GM10248 (cell line): ENCODE measurements at regions of chrX and their contacts with region 1.

Region 1: GRCh38 chrX:151151665-151152267 is 24.6 kb upstream of the GPR50 start:
- DNase-seq: peak; percentile 38
- CTCF ChIP-seq: peak; percentile 68

Region 2: DNA sequence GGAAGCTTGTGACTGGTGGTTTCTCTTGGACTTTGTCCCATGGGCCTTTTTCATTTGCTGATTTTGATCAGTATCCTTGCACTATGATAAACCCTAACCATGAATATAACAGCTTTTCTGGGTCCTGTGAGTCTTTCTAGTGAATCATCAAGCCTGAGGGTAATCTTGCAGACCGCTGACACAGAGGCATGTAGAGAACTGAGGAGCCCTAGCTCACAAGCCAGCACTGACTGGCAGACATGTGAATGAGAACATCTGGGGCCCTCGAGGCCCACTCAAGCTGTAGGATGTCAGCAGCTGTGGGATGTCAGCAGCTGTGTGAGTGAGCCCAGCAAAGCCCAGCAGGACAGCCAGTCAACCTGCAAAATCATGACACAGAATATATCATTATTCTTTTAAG is 131.9 kb before region 1 on chrX:
- CTCF ChIA-PET with region 1: no interaction called
- POLR2A ChIA-PET with region 1: no interaction called
- DNase-seq: no peak
- CTCF ChIP-seq: no peak

Region 3: GRCh38 chrX:151675121-151675746 is 523.5 kb after region 1 on chrX:
- CTCF ChIA-PET with region 1: interaction called, 14 read pairs
- POLR2A ChIA-PET with region 1: no interaction called
- DNase-seq: no peak
- CTCF ChIP-seq: no peak

Region 4: DNA sequence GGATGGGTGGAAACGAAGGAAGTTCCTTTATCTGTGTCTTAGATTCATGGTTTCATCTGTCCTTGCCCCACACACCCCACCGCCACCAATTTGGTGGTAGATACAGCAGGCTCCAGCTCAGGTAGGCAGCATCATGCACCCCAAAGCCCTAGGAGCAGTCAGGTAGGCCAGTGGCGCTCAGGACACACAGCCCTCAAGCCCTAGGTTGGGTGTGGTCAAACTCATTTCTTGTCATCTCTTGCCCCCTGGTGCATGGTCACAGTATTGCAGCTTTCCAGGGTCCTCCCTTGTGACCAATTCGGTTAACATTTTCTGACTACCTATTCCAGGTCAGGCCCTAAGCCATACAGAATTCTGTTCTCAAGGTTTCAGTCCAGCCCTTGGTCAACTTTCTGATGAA is 529.0 kb after region 1 on chrX:
- CTCF ChIA-PET with region 1: interaction called, 14 read pairs
- POLR2A ChIA-PET with region 1: no interaction called
- DNase-seq: peak; percentile 46
- CTCF ChIP-seq: peak; percentile 48

Region 5: GRCh38 chrX:151776181-151776731 is 624.5 kb after region 1 on chrX:
- CTCF ChIA-PET with region 1: no interaction called
- POLR2A ChIA-PET with region 1: no interaction called
- DNase-seq: no peak
- CTCF ChIP-seq: no peak

Region 6: DNA sequence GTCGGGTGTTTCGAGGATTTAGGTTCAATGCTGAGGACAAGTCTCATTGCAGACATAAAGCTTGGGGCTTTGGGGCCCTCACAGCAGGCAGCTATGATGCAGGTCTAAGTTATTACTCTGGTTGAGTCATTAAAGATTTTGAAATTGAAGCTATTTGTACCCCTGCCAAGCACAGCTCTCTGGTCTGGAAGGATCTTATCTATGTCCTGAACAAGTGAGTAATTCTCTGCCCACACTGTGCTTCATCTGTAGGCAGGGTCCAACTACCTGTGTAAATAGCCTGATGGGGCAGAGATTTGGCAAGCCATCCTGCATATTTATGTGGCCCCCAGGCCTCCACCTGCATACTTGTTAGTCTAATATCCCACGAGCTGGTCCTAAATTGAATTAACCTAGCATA is 719.5 kb after region 1 on chrX:
- CTCF ChIA-PET with region 1: no interaction called
- POLR2A ChIA-PET with region 1: no interaction called
- DNase-seq: no peak
- CTCF ChIP-seq: no peak